IMR-90 (cell line): ENCODE measurements at regions of chr4 and their contacts with region 1.

Region 1: GRCh38 chr4:105471566-105472176 is 2.2 kb downstream of the PPA2 start:
- DNase-seq: peak; percentile 79
- ATAC-seq: peak; percentile 24
- H3K4me3 ChIP-seq: no peak overlapping the region
- H3K27ac ChIP-seq: no peak overlapping the region
- H3K4me1 ChIP-seq: peaks cover 3% of the 10 kb centered on the region; the same call in 1 of the 2 replicates
- H3K27me3 ChIP-seq: no peaks in the 10 kb centered on the region
- CTCF ChIP-seq: peak; percentile 80
- POLR2A ChIP-seq: no peak
- RAD21 ChIP-seq: peak; percentile 89

Region 2: GRCh38 chr4:104930298-104930697 is 541.4 kb before region 1 on chr4:
- CTCF ChIA-PET with region 1: interaction called, 4 read pairs
- POLR2A ChIA-PET with region 1: no interaction called
- dilution Hi-C with region 1: no loop called
- in situ Hi-C with region 1: loop called (anchors 10 kb)
- intact Hi-C with region 1: loop called (anchors 1 kb)
- DNase-seq: no peak
- ATAC-seq: no peak
- H3K4me3 ChIP-seq: no peak overlapping the region
- H3K27ac ChIP-seq: no peak overlapping the region
- H3K4me1 ChIP-seq: no peaks in the 10 kb centered on the region
- H3K27me3 ChIP-seq: no peaks in the 10 kb centered on the region
- CTCF ChIP-seq: no peak
- POLR2A ChIP-seq: no peak
- RAD21 ChIP-seq: no peak

Region 3: DNA sequence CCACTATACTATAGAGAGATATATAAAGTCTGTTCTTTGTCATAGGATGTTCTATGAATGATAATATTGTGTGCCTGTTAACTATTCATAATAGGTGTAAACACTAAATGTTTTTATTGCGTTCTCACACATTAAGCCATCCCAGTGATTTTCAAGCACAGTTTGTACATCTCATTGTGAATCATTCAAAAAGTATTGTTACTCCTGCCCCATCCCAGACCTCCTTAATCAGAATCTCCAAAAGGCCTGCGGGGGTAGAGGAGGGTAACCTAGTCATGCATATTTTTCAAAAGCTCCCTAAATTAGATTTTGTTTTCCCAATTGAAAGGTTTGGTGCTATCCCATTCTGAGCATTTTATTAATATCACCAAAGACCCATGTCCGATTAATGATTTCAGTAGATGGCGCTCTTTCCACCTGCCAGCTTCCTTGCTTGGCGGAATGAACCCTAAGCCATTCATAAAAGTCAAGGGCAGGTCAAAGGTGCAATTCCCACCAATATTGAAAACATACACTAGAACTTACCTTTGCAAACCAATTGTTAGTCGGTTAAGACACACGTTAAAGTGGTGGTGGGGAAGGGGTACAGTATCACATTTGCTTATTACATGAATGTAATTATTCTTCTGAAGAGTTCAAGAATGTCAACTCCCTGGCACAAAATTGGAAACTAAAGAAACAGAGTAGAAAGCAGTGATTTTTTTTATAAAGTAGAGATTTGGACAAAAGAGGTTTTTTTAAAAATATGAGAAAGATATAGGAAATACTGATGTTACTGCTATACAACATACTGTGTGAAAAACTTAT is 330.8 kb before region 1 on chr4:
- CTCF ChIA-PET with region 1: interaction called, 8 read pairs
- POLR2A ChIA-PET with region 1: no interaction called
- dilution Hi-C with region 1: no loop called
- in situ Hi-C with region 1: loop called (anchors 5 kb)
- intact Hi-C with region 1: loop called (anchors 1 kb)
- DNase-seq: no peak
- ATAC-seq: peak; percentile 59
- H3K4me3 ChIP-seq: no peak overlapping the region
- H3K27ac ChIP-seq: no peak overlapping the region
- H3K4me1 ChIP-seq: no peaks in the 10 kb centered on the region
- H3K27me3 ChIP-seq: no peaks in the 10 kb centered on the region
- CTCF ChIP-seq: peak; percentile 65
- POLR2A ChIP-seq: no peak
- RAD21 ChIP-seq: peak; percentile 72

Region 4: DNA sequence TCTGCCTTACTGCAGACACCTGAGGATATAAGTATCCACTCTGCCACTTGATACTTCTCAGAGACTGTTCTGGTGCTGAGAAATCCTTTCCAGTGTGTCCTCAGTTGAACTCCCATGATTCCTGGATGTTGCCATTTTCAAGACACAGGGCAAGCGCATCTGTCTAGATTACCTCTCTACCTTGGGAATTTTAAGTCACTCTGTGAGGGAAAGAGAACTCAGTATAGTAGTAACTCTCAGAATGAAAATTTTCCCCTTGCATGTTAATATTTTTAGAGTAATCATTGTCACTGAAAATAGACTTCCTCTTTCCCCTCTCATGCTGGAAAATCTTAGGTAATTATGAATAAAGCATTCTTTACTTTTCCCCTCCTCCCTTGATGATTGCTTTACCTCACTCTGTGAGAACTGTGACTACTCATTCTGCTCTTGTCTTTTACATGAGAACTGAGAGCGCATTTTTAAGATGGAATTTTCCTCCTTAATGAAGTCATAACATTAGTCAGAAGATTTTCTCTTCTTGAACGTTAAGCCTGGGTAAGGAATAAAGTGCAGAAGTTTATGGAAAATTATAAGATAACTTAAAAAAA is 280.0 kb before region 1 on chr4:
- CTCF ChIA-PET with region 1: no interaction called
- POLR2A ChIA-PET with region 1: interaction called, 3 read pairs
- dilution Hi-C with region 1: no loop called
- in situ Hi-C with region 1: no loop called
- intact Hi-C with region 1: loop called (anchors 5 kb)
- DNase-seq: peak; percentile 72
- ATAC-seq: peak; percentile 33
- H3K4me3 ChIP-seq: no peak overlapping the region
- H3K27ac ChIP-seq: no peak overlapping the region
- H3K4me1 ChIP-seq: peaks cover 9% of the 10 kb centered on the region
- H3K27me3 ChIP-seq: no peaks in the 10 kb centered on the region
- CTCF ChIP-seq: no peak
- POLR2A ChIP-seq: no peak
- RAD21 ChIP-seq: no peak

Region 5: GRCh38 chr4:105527081-105527480 is 55.4 kb after region 1 on chr4:
- CTCF ChIA-PET with region 1: no interaction called
- POLR2A ChIA-PET with region 1: no interaction called
- dilution Hi-C with region 1: no loop called
- in situ Hi-C with region 1: no loop called
- intact Hi-C with region 1: no loop called
- DNase-seq: no peak
- ATAC-seq: no peak
- H3K4me3 ChIP-seq: no peak overlapping the region
- H3K27ac ChIP-seq: no peak overlapping the region
- H3K4me1 ChIP-seq: no peaks in the 10 kb centered on the region
- H3K27me3 ChIP-seq: no peaks in the 10 kb centered on the region
- CTCF ChIP-seq: no peak
- POLR2A ChIP-seq: no peak
- RAD21 ChIP-seq: no peak

Region 6: GRCh38 chr4:105708530-105709391 is 237.1 kb after region 1 on chr4 and contains the starts of genes GSTCD and INTS12:
- CTCF ChIA-PET with region 1: no interaction called
- POLR2A ChIA-PET with region 1: no interaction called
- dilution Hi-C with region 1: no loop called
- in situ Hi-C with region 1: no loop called
- intact Hi-C with region 1: loop called (anchors 2 kb)
- DNase-seq: peak; percentile 93
- ATAC-seq: peak; percentile 99
- H3K4me3 ChIP-seq: peak within 1 kb of the TSS; percentile 59
- H3K27ac ChIP-seq: peak within 1 kb of the TSS; percentile 75
- H3K4me1 ChIP-seq: no peaks in the 10 kb centered on the region
- H3K27me3 ChIP-seq: no peaks in the 10 kb centered on the region
- CTCF ChIP-seq: no peak
- POLR2A ChIP-seq: peak; percentile 89
- RAD21 ChIP-seq: no peak
- total RNA-seq, gene GSTCD: 16.7 and 20.3 TPM in 2 replicates
- total RNA-seq, gene INTS12: 30.8 and 36.0 TPM in 2 replicates